Endothelial cell of umbilical vein (primary cell): ENCODE measurements at regions of chr5 and their contacts with region 1.

Region 1: DNA sequence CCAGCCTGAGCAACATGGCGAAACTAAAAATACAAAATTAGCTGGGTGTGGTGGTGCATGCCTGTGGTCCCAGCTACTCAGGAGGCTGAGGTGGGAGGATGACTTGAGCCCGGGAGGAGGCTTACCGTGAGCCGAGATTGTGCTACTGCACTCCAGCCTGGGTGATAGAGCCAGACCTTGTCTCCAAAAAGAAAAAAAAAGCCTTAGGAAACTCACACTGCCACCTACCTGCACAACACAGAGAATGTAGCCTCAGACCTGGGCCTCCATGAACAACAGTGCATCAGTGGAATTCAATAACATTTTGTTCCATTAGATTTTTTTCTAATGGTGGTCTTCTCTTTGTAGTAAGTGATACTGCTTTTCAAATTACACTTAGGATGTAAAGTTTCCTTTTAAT is 63.8 kb upstream of the RARS1 start:
- DNase-seq: no peak
- H3K4me3 ChIP-seq: no peak overlapping the region
- H3K27ac ChIP-seq: no peak overlapping the region
- H3K4me1 ChIP-seq: no peaks in the 10 kb centered on the region
- H3K27me3 ChIP-seq: no peaks in the 10 kb centered on the region
- CTCF ChIP-seq: no peak
- POLR2A ChIP-seq: no peak

Region 2: GRCh38 chr5:168268949-168269943 is 153.2 kb before region 1 on chr5:
- CTCF ChIA-PET with region 1: no interaction called
- POLR2A ChIA-PET with region 1: no interaction called
- dilution Hi-C with region 1: no loop called
- intact Hi-C with region 1: loop called (anchors 1 kb)
- DNase-seq: peak; percentile 87
- H3K4me3 ChIP-seq: peak overlapping the region in 1 of 3 experiments; percentile 3
- H3K27ac ChIP-seq: no peak overlapping the region
- H3K4me1 ChIP-seq: no peaks in the 10 kb centered on the region
- H3K27me3 ChIP-seq: no peaks in the 10 kb centered on the region
- CTCF ChIP-seq: peak; percentile 87 to 88
- POLR2A ChIP-seq: no peak